HepG2 (cell line): ENCODE measurements at regions of chrX and their contacts with region 1.

Region 1: DNA sequence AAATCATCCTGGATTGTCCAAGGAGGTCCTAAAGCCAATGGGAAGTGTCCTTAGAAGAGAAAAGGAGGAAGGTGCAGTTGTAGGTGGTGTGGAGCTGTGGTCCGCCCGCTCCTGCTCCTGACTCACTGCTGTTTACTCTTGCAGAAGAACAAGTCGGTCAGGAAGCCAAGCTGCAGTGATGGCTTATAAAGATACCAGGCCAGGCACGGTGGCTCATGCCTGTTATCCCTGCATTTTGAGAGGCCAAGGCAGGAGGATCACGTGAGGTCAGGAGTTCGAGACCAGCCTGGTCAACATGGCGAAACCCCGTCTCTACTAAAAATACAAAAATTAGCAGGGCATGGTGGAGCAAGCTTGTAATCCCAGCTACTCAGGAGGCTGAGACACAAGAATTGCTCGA is 66.4 kb upstream of the ATP6AP2 start:
- DNase-seq: peak; percentile 3
- ATAC-seq: no peak
- H3K4me3 ChIP-seq: no peak overlapping the region
- H3K27ac ChIP-seq: peak overlapping the region; percentile 66
- H3K4me1 ChIP-seq: peaks cover 29% of the 10 kb centered on the region
- H3K27me3 ChIP-seq: no peaks in the 10 kb centered on the region
- CTCF ChIP-seq: no peak
- EP300 ChIP-seq: no peak
- POLR2A ChIP-seq: no peak
- RAD21 ChIP-seq: no peak

Region 2: DNA sequence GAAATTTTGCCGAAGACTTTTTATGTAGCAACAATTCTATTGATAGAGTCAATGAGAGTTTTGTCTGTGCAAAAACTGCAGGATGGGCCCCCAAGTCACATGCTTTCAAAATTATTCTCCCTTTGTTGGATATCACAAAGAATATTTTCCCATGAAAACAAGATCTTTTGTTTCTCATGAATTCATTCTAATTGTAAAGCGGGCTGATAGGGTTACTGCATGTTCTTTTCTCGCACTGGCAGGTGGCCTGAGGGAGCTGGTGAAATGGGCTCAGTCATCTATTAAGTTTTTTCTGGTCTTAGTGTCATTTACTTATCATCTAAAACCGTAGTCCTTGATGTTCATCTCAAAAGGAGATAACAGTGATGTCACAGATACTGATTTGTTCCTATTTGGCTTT is 1669.0 kb before region 1 on chrX:
- CTCF ChIA-PET with region 1: no interaction called
- POLR2A ChIA-PET with region 1: no interaction called
- in situ Hi-C with region 1: no loop called
- intact Hi-C with region 1: loop called (anchors 5 kb)
- DNase-seq: no peak
- ATAC-seq: no peak
- H3K4me3 ChIP-seq: no peak overlapping the region
- H3K27ac ChIP-seq: no peak overlapping the region
- H3K4me1 ChIP-seq: peaks cover 18% of the 10 kb centered on the region
- H3K27me3 ChIP-seq: no peaks in the 10 kb centered on the region
- CTCF ChIP-seq: no peak
- EP300 ChIP-seq: no peak
- POLR2A ChIP-seq: no peak
- RAD21 ChIP-seq: no peak